Sigmoid colon (tissue), 7 donors: ENCODE measurements at regions of chrX and their contacts with region 1.

Region 1: GRCh38 chrX:100895365-100896075 is 21.4 kb upstream of the NOX1 start:
- DNase-seq: no peak
- H3K4me3 ChIP-seq: no peak overlapping the region
- H3K27ac ChIP-seq: no peak overlapping the region
- H3K4me1 ChIP-seq: no peaks in the 10 kb centered on the region
- H3K27me3 ChIP-seq: no peaks in the 10 kb centered on the region
- CTCF ChIP-seq: peak in 1 of 4 experiments; percentile 34
- EP300 ChIP-seq: no peak
- POLR2A ChIP-seq: no peak

Region 2: DNA sequence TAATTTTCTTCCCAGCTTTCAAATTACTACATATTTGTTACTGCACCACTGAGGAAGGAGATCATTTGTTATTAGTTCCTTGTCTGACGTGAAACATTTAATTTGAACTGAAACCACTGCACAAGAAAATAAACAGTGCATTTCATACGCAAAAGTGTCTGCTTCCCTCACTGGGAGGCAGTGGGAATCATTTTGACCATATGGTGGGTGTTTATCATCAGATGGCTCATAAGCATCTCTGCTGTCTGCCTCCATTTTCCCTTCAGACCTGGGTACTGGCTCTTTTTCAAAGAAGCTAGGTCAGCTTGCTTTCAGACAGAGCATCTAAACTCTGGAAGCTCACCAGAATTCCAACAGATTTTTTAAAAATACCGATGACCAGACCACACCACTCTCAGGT is 620.6 kb before region 1 on chrX:
- intact Hi-C with region 1: no loop called
- DNase-seq: no peak
- H3K4me3 ChIP-seq: no peak overlapping the region
- H3K27ac ChIP-seq: no peak overlapping the region
- H3K4me1 ChIP-seq: no peaks in the 10 kb centered on the region
- H3K27me3 ChIP-seq: no peaks in the 10 kb centered on the region
- CTCF ChIP-seq: no peak
- EP300 ChIP-seq: no peak
- POLR2A ChIP-seq: no peak

Region 3: GRCh38 chrX:100615005-100615404 is 280.5 kb before region 1 on chrX:
- intact Hi-C with region 1: no loop called
- DNase-seq: no peak
- H3K4me3 ChIP-seq: no peak overlapping the region
- H3K27ac ChIP-seq: no peak overlapping the region
- H3K4me1 ChIP-seq: no peaks in the 10 kb centered on the region
- H3K27me3 ChIP-seq: no peaks in the 10 kb centered on the region
- CTCF ChIP-seq: no peak
- EP300 ChIP-seq: no peak
- POLR2A ChIP-seq: no peak

Region 4: DNA sequence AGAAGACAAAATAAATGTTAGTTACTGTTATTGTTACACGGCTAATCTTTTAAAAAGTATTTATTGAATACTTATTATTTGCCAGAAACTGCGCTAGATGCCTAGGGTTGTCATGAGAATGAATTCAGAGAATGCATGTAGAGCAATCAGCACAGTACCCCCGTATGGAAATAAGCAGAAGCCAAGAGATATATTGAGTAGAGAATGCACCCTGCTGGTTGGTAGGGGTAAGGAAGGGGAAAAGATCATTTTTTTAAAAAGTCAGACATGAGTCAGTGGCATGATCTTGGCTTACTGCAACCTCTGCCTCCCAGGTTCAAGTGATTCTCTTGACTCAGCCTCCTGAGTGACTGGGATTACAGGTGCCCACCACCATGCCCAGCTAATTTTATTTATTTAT is 311.0 kb after region 1 on chrX:
- intact Hi-C with region 1: no loop called
- DNase-seq: no peak
- H3K4me3 ChIP-seq: no peak overlapping the region
- H3K27ac ChIP-seq: peak overlapping the region in 1 of 4 donors; percentile 64
- H3K4me1 ChIP-seq: peaks cover 0 to 40% (median 10%) of the 10 kb centered on the region in 4 donors
- H3K27me3 ChIP-seq: no peaks in the 10 kb centered on the region
- CTCF ChIP-seq: peak in 2 of 4 experiments; percentile 25 to 45
- EP300 ChIP-seq: no peak
- POLR2A ChIP-seq: no peak

Region 5: DNA sequence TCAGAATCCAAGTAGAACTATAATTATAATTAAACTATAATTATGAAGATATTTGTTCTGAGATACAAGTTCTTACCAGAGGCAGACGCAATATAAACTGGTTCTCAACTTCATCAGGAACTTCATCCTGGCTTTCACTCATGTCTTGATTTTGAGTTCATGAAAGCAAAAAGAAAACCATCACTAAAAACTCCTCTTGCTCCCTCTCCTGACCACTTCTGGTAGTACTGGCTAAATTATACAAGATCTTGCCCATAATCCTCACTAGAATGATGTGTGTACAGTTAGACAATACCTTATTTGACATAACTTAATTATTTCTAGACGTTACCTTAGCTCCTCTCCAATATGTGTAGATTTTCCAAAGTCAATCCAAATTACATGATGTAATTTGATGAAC is 391.9 kb after region 1 on chrX:
- intact Hi-C with region 1: loop called (anchors 5 kb)
- DNase-seq: no peak
- H3K4me3 ChIP-seq: no peak overlapping the region
- H3K27ac ChIP-seq: no peak overlapping the region
- H3K4me1 ChIP-seq: no peaks in the 10 kb centered on the region
- H3K27me3 ChIP-seq: peaks cover 0 to 6% (median 0%) of the 10 kb centered on the region in 3 donors
- CTCF ChIP-seq: peak; percentile 21 to 51 (median 38)
- EP300 ChIP-seq: no peak
- POLR2A ChIP-seq: no peak